MCF 10A (cell line): ENCODE measurements at regions of chr20 and their contacts with region 1.

Region 1: DNA sequence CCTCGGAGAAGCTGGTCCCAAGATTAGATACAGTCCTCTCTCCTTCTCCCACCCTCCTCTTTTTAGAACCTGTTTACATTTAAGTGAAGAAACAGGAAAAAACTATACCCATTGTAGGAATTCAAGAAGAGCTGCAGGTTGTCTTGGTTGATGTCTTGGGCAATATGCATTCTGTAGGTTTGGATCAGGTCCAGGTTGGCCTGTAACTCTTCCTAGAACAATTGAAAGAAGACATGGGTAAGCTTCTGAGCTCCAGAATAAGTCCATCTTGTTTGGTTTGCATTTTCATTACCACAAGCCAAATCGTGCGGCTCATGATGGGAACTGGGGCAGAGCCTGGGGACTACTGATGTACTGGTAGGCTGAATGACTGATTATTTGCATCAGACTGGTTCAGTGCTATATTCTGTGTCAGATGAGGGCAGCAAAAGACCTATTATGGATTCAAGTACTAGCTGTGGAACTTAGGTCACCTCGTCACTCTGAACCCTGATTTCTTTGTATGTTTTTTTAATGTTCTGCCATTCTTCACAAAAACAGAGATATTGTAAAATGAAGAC is 20.3 kb upstream of the SLA2 start:
- DNase-seq: peak; percentile 58
- H3K4me3 Mint-ChIP-seq: no peak overlapping the region
- H3K27ac Mint-ChIP-seq: no peak overlapping the region
- H3K4me1 Mint-ChIP-seq: peaks cover 5% of the 10 kb centered on the region
- H3K27me3 Mint-ChIP-seq: no peaks in the 10 kb centered on the region
- CTCF ChIP-seq: peak; percentile 14

Region 2: GRCh38 chr20:36399147-36399968 is 266.9 kb before region 1 on chr20:
- CTCF ChIA-PET with region 1: no interaction called
- POLR2A ChIA-PET with region 1: no interaction called
- intact Hi-C with region 1: no loop called
- DNase-seq: peak; percentile 56
- H3K4me3 Mint-ChIP-seq: no peak overlapping the region
- H3K27ac Mint-ChIP-seq: no peak overlapping the region
- H3K4me1 Mint-ChIP-seq: no peaks in the 10 kb centered on the region
- H3K27me3 Mint-ChIP-seq: peaks cover 49% of the 10 kb centered on the region
- CTCF ChIP-seq: no peak

Region 3: DNA sequence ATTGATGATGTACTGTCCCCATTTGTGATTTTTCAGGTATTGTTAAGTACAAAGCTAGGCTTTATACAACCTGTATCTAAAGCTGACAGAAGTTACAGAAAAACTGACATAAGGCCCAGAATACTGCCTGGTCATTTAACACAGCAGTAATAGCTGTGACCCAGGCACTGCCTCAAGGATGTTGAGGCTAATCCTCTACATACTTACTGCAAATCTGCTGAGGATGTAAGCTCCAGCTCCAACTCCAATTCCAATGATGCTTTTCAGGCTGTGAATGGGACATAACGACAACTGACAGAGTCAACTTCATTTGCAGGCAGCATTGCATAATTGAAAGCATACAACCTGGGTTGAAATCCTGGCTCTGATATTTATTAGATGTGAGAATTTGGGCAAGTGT is 16.1 kb after region 1 on chr20:
- CTCF ChIA-PET with region 1: interaction called, 20 read pairs
- POLR2A ChIA-PET with region 1: interaction called, 3 read pairs
- intact Hi-C with region 1: no loop called
- DNase-seq: no peak
- H3K4me3 Mint-ChIP-seq: no peak overlapping the region
- H3K27ac Mint-ChIP-seq: no peak overlapping the region
- H3K4me1 Mint-ChIP-seq: no peaks in the 10 kb centered on the region
- H3K27me3 Mint-ChIP-seq: no peaks in the 10 kb centered on the region
- CTCF ChIP-seq: no peak

Region 4: GRCh38 chr20:36745927-36746659 is 79.8 kb after region 1 on chr20 and contains the start of gene NDRG3:
- CTCF ChIA-PET with region 1: interaction called, 12 read pairs
- POLR2A ChIA-PET with region 1: interaction called, 5 read pairs
- intact Hi-C with region 1: no loop called
- DNase-seq: peak; percentile 89
- H3K4me3 Mint-ChIP-seq: peak within 1 kb of the TSS; percentile 86
- H3K27ac Mint-ChIP-seq: peak within 1 kb of the TSS; percentile 63
- H3K4me1 Mint-ChIP-seq: peaks cover 15% of the 10 kb centered on the region
- H3K27me3 Mint-ChIP-seq: no peaks in the 10 kb centered on the region
- CTCF ChIP-seq: no peak
- total RNA-seq, gene NDRG3: 7.5 and 10.3 TPM in 2 replicates

Region 5: GRCh38 chr20:36919715-36920333 is 253.6 kb after region 1 on chr20:
- CTCF ChIA-PET with region 1: interaction called, 10 read pairs
- POLR2A ChIA-PET with region 1: interaction called, 4 read pairs
- intact Hi-C with region 1: loop called (anchors 10 kb)
- DNase-seq: peak; percentile 66
- H3K4me3 Mint-ChIP-seq: no peak overlapping the region
- H3K27ac Mint-ChIP-seq: no peak overlapping the region
- H3K4me1 Mint-ChIP-seq: no peaks in the 10 kb centered on the region
- H3K27me3 Mint-ChIP-seq: no peaks in the 10 kb centered on the region
- CTCF ChIP-seq: peak; percentile 65

Region 6: GRCh38 chr20:36969478-36970186 is 303.4 kb after region 1 on chr20:
- CTCF ChIA-PET with region 1: no interaction called
- POLR2A ChIA-PET with region 1: no interaction called
- intact Hi-C with region 1: no loop called
- DNase-seq: no peak
- H3K4me3 Mint-ChIP-seq: no peak overlapping the region
- H3K27ac Mint-ChIP-seq: no peak overlapping the region
- H3K4me1 Mint-ChIP-seq: no peaks in the 10 kb centered on the region
- H3K27me3 Mint-ChIP-seq: no peaks in the 10 kb centered on the region
- CTCF ChIP-seq: no peak